ENCODE measurements at regions of chr6 and their contacts with region 1.

Region 1: GRCh38 chr6:159654483-159655098 is 38.5 kb downstream of the SOD2 start:
- DNase-seq: no peak
- ATAC-seq: peak; percentile 32; the same call in 1 of the 2 replicates
- H3K4me3 Mint-ChIP-seq: no peak overlapping the region
- H3K27ac Mint-ChIP-seq: no peak overlapping the region
- H3K4me1 Mint-ChIP-seq: peaks cover 18% of the 10 kb centered on the region
- H3K27me3 Mint-ChIP-seq: no peaks in the 10 kb centered on the region
- CTCF ChIP-seq: peak; percentile 55

Region 2: DNA sequence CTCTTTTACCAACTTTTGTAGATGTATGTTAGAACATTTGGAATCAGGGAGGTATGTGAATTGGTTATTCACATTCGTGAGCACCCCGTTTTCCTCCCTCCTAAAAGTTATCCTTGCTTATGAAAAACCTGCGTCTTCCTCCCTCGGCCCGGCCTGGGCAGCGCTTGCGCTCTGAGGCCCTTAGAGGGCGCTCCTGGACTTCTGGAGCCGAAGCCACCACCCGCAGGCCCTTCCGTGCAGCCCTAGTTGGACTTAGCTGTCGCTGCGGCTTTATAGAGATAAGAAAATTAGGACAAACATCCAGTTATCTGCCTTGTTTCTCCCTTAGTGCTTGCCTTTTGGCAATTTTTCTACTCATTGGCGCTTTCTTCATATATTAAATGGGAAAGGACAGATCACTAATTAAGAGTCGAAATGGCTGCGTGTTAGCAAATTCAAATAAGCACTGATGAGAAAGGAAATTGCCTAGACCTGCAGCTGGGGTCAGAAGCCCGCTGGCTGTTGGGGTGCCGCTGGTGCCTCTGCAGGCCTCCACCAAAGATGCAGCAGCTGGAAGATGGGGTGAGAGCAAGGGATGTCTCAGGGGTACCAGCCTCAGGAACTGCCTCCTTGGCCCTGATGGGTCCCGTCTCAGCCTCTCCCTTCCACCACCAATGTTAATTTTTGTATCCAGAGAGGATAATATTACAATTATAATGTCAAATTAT is 480.2 kb before region 1 on chr6:
- CTCF ChIA-PET with region 1: interaction called, 25 read pairs
- POLR2A ChIA-PET with region 1: no interaction called
- DNase-seq: peak; percentile 83
- ATAC-seq: peak; percentile 81
- H3K4me3 Mint-ChIP-seq: peak overlapping the region; percentile 31; the same call in 1 of the 2 replicates
- H3K27ac Mint-ChIP-seq: no peak overlapping the region
- H3K4me1 Mint-ChIP-seq: peaks cover 8% of the 10 kb centered on the region
- H3K27me3 Mint-ChIP-seq: peaks cover 52% of the 10 kb centered on the region
- CTCF ChIP-seq: peak; percentile 79; the same call in 1 of the 2 replicates

Region 3: GRCh38 chr6:159217595-159218275 is 436.9 kb before region 1 on chr6:
- CTCF ChIA-PET with region 1: interaction called, 23 read pairs
- POLR2A ChIA-PET with region 1: no interaction called
- DNase-seq: peak; percentile 80
- ATAC-seq: peak; percentile 94
- H3K4me3 Mint-ChIP-seq: no peak overlapping the region
- H3K27ac Mint-ChIP-seq: peak overlapping the region; percentile 21; the same call in 1 of the 2 replicates
- H3K4me1 Mint-ChIP-seq: peaks cover 23% of the 10 kb centered on the region
- H3K27me3 Mint-ChIP-seq: no peaks in the 10 kb centered on the region
- CTCF ChIP-seq: 0 out of 2 replicates have a peak, but pooled peaks have one; percentile 14

Region 4: DNA sequence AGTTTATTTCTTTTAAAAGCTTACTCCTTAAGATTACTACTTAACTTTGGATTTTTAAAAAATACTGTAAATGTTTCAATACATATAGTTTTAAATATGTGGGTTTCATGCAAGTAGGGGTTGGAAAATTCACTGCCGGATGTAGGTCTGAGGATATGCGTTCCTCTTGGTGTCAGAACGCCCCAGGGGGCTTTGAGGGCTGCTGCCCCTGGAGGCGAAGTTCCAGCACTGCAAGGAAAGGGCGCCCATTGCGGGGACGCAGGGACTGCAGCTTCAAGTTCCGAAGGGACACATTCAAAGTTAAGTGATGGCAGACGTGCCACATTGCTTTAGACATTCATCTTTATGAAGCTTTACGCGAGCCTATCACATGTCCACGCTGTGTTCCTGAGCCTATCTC is 114.4 kb before region 1 on chr6:
- CTCF ChIA-PET with region 1: interaction called, 12 read pairs
- POLR2A ChIA-PET with region 1: no interaction called
- DNase-seq: peak; percentile 82
- ATAC-seq: peak; percentile 93
- H3K4me3 Mint-ChIP-seq: no peak overlapping the region
- H3K27ac Mint-ChIP-seq: no peak overlapping the region
- H3K4me1 Mint-ChIP-seq: peaks cover 10% of the 10 kb centered on the region
- H3K27me3 Mint-ChIP-seq: peaks cover 12% of the 10 kb centered on the region
- CTCF ChIP-seq: peak; percentile 66